ENCODE measurements at regions of chr19 and their contacts with region 1.

Region 1: GRCh38 chr19:19488875-19489690 is 26.3 kb downstream of the TSSK6 start:
- DNase-seq: peak; percentile 94
- H3K4me3 ChIP-seq: peak overlapping the region; percentile 11 to 23 (median 16)
- H3K27ac ChIP-seq: peak overlapping the region; percentile 56 to 71 (median 62)
- H3K4me1 ChIP-seq: peaks cover 40 to 63% (median 52%) of the 10 kb centered on the region in 4 donors
- H3K27me3 ChIP-seq: no peaks in the 10 kb centered on the region
- CTCF ChIP-seq: no peak
- EP300 ChIP-seq: no peak
- POLR2A ChIP-seq: no peak

Region 2: GRCh38 chr19:19366612-19367396 is 122.3 kb before region 1 on chr19:
- intact Hi-C with region 1: loop called (anchors 1 kb)
- DNase-seq: no peak
- H3K4me3 ChIP-seq: no peak overlapping the region
- H3K27ac ChIP-seq: no peak overlapping the region
- H3K4me1 ChIP-seq: peaks cover 12 to 23% (median 17%) of the 10 kb centered on the region in 4 donors
- H3K27me3 ChIP-seq: no peaks in the 10 kb centered on the region
- CTCF ChIP-seq: peak; percentile 93 to 96 (median 96)
- EP300 ChIP-seq: no peak
- POLR2A ChIP-seq: no peak

Region 3: DNA sequence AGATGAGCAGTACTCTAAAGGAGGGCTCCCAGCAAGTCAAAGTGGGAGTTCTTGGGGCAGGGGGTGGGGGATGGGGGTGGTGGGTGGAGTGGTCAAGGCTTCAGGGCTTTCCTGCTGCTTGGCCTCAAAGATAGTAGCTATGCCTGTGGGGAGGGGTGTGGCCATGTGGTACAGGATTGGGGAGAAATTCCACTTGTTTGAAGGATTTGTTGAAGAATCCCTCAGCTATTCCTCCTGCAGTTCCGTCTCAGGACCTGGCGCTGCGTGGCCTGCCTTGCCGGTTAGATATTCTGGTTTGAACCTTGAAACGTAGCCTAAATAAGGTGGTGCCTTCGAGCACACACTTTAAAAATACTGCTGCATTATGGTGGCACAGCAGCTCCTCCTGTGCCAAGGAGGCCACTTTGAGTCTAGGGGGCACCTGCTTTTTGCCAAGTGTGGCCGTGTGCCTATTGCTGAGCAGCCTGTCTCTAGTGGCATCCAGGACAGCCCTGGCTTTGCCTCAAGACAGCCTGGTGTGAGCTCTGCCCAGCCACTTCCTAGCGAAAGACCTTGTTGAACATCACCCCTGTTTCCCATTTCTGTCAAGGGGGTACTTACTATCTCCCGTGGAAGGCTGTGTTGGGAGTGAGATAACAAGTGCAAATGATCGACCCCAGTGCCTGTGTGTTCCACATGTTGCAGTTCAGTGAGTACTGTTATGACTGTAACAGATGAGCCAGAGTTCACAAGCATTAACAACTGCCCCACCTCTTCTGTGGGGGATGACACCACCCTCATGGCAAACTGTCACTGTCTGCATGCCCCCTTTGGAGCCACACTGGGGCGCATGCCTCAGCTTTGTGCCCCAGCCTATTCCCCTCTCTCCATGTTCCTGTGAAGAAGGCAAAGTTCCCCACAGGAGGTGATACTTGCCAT is 78.5 kb before region 1 on chr19:
- intact Hi-C with region 1: loop called (anchors 10 kb)
- DNase-seq: no peak
- H3K4me3 ChIP-seq: no peak overlapping the region
- H3K27ac ChIP-seq: no peak overlapping the region
- H3K4me1 ChIP-seq: peaks cover 39 to 65% (median 53%) of the 10 kb centered on the region in 4 donors
- H3K27me3 ChIP-seq: no peaks in the 10 kb centered on the region
- CTCF ChIP-seq: no peak
- EP300 ChIP-seq: no peak
- POLR2A ChIP-seq: no peak

Region 4: DNA sequence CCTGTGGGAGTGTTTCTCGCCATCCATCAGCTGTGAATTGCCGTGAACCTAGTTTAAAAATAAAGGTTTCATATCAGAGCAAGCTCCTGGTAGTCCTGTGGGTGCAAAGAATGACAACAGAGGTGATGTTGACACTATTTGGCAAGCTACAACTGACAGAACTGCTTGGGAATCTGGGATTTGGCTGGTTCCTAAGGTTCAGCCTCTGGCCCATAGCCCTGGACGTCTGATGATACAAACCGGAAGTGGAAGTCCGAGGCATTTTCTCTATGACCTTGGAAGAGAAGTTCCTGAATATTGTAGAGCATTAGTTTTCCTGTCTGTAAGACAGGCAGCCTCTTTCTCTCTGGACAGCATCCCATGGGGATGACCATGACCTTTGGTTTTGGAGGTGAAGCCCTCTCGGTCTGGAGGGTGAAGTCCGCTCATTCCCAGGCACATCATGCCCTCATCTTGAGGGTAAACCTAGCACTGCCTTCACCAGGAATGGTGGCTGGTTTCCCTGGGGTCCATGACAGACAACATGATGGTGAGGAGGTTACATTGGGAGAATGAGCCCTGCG is 54.5 kb before region 1 on chr19:
- intact Hi-C with region 1: no loop called
- DNase-seq: no peak
- H3K4me3 ChIP-seq: peak overlapping the region in 1 of 4 donors; percentile 0
- H3K27ac ChIP-seq: peak overlapping the region in 3 of 4 donors; percentile 15 to 50 (median 28)
- H3K4me1 ChIP-seq: peaks cover 34 to 70% (median 44%) of the 10 kb centered on the region in 4 donors
- H3K27me3 ChIP-seq: no peaks in the 10 kb centered on the region
- CTCF ChIP-seq: no peak
- EP300 ChIP-seq: no peak
- POLR2A ChIP-seq: no peak